Heart left ventricle (tissue), 16 donors: ENCODE measurements at regions of chr10 and their contacts with region 1.

Region 1: DNA sequence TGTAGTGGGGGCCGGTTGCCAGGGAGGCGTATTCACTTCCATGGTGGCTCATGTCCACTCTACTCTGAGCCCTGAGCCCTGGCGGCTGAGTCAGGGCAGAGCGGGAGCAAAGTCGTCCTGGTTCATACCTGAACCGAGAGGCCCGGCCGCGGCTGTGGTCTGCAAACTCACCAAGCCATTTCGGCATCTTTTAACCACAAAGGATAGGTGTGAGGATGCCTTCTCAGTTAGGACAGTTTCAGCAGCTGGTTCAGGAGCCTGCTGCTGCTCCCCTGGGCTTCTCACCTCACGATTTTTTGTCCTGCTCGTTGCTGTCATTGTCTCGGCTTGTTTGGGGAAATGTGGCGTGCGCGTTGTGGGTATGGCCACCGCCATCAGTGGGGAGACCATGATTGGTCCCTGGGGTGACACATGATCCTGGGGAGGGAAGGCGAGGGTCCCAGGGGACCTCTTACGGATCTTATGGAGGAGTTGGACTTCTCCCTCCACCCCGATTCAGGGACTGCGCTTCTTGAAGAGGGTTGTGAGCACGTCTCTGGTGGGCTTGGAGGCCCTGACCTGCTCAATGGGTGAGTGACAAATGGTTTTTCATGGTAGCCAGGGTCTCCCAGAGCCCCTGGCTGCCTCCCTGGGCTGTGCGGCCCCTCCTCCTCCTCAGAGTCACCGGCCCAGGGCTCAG is 26.4 kb downstream of the INPP5A start:
- DNase-seq: no peak
- ATAC-seq: no peak
- H3K4me3 ChIP-seq: no peak overlapping the region
- H3K27ac ChIP-seq: no peak overlapping the region
- H3K4me1 ChIP-seq: peaks cover 0 to 52% (median 9%) of the 10 kb centered on the region in 12 donors
- H3K27me3 ChIP-seq: no peaks in the 10 kb centered on the region
- CTCF ChIP-seq: no peak
- POLR2A ChIP-seq: no peak

Region 2: GRCh38 chr10:133261726-133262325 is 697.8 kb after region 1 on chr10:
- intact Hi-C with region 1: loop called in 1 of 10 experiments (anchors 5 kb)
- DNase-seq: peak; percentile 88 to 95 (median 91)
- ATAC-seq: peak; percentile 62 to 88 (median 76)
- H3K4me3 ChIP-seq: peak overlapping the region; percentile 49 to 85 (median 77)
- H3K27ac ChIP-seq: peak overlapping the region; percentile 77 to 96 (median 89)
- H3K4me1 ChIP-seq: peaks cover 5 to 69% (median 37%) of the 10 kb centered on the region in 12 donors
- H3K27me3 ChIP-seq: no peaks in the 10 kb centered on the region
- CTCF ChIP-seq: no peak
- POLR2A ChIP-seq: peak in 1 of 2 donors; percentile 67